Head of caudate nucleus (tissue), 42 donors: ENCODE measurements at regions of chr9 and their contacts with region 1.

Region 1: GRCh38 chr9:95447660-95448420 is 68.9 kb downstream of the PTCH1 start:
- DNase-seq: no peak

Region 2: GRCh38 chr9:95317119-95317892 is 130.5 kb before region 1 on chr9 and contains the start of gene FANCC:
- intact Hi-C with region 1: loop called (anchors 10 kb)
- DNase-seq: peak; percentile 76 to 97 (median 94)

Region 3: GRCh38 chr9:95425910-95426551 is 21.8 kb before region 1 on chr9:
- intact Hi-C with region 1: no loop called
- DNase-seq: no peak

Region 4: GRCh38 chr9:95552814-95553546 is 105.1 kb after region 1 on chr9:
- intact Hi-C with region 1: no loop called
- DNase-seq: no peak